ENCODE measurements at regions of chr21 and their contacts with region 1.

Region 1: GRCh38 chr21:26170471-26171257 is at the start of gene APP:
- DNase-seq: peak; percentile 87
- H3K4me3 Mint-ChIP-seq: peak within 1 kb of the TSS; percentile 90
- H3K27ac Mint-ChIP-seq: peak within 1 kb of the TSS; percentile 66
- H3K4me1 Mint-ChIP-seq: peaks cover 21% of the 10 kb centered on the region
- H3K27me3 Mint-ChIP-seq: no peaks in the 10 kb centered on the region
- total RNA-seq, gene APP: 60.6 to 61.1 TPM

Region 2: DNA sequence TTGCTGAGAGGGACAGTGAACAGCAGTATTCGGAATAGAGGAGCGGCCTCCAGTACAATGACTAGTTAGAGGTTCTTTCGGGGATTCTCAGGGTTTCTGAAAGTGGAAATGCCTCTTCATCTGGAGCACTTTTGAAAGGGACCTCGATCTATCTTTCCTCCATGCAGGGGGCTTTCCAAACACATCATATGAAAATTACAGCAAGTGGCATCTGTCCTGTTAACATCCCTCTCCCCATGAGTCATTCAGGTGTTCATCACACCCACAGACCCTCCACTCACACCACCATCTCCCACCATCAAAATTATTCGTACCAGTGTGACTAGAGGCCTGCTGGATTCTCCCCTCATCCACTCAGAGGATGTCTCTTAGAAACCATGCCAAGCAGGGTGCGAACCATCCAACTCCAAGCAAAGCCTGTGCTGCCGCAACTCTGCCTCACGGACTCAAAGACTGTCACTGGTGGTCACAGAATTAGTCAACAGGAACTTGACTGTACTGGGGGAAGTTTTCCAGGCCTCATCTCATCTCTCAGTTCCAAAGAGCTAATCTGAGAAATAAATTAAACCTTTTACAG is 774.4 kb before region 1 on chr21:
- CTCF ChIA-PET with region 1: no interaction called
- intact Hi-C with region 1: loop called (anchors 10 kb)
- DNase-seq: peak; percentile 89
- H3K4me3 Mint-ChIP-seq: peak overlapping the region; percentile 41
- H3K27ac Mint-ChIP-seq: peak overlapping the region; percentile 81
- H3K4me1 Mint-ChIP-seq: peaks cover 18% of the 10 kb centered on the region
- H3K27me3 Mint-ChIP-seq: peaks cover 2% of the 10 kb centered on the region

Region 3: GRCh38 chr21:25801217-25802014 is 369.2 kb before region 1 on chr21:
- CTCF ChIA-PET with region 1: no interaction called
- intact Hi-C with region 1: loop called (anchors 5 kb)
- DNase-seq: peak; percentile 95
- H3K4me3 Mint-ChIP-seq: peak overlapping the region; percentile 23
- H3K27ac Mint-ChIP-seq: no peak overlapping the region
- H3K4me1 Mint-ChIP-seq: peaks cover 6% of the 10 kb centered on the region
- H3K27me3 Mint-ChIP-seq: peaks cover 8% of the 10 kb centered on the region

Region 4: GRCh38 chr21:25895565-25896205 is 275.0 kb before region 1 on chr21:
- CTCF ChIA-PET with region 1: interaction called, 28 read pairs
- intact Hi-C with region 1: loop called (anchors 1 kb)
- DNase-seq: peak; percentile 37
- H3K4me3 Mint-ChIP-seq: no peak overlapping the region
- H3K27ac Mint-ChIP-seq: no peak overlapping the region
- H3K4me1 Mint-ChIP-seq: peaks cover 6% of the 10 kb centered on the region
- H3K27me3 Mint-ChIP-seq: no peaks in the 10 kb centered on the region

Region 5: GRCh38 chr21:26011292-26011940 is 159.2 kb before region 1 on chr21:
- CTCF ChIA-PET with region 1: no interaction called
- intact Hi-C with region 1: loop called (anchors 2 kb)
- DNase-seq: no peak
- H3K4me3 Mint-ChIP-seq: no peak overlapping the region
- H3K27ac Mint-ChIP-seq: no peak overlapping the region
- H3K4me1 Mint-ChIP-seq: no peaks in the 10 kb centered on the region
- H3K27me3 Mint-ChIP-seq: no peaks in the 10 kb centered on the region

Region 6: GRCh38 chr21:26127918-26128317 is 42.7 kb before region 1 on chr21:
- CTCF ChIA-PET with region 1: no interaction called
- intact Hi-C with region 1: no loop called
- DNase-seq: no peak
- H3K4me3 Mint-ChIP-seq: no peak overlapping the region
- H3K27ac Mint-ChIP-seq: no peak overlapping the region
- H3K4me1 Mint-ChIP-seq: peaks cover 8% of the 10 kb centered on the region
- H3K27me3 Mint-ChIP-seq: no peaks in the 10 kb centered on the region

Region 7: GRCh38 chr21:26157801-26158200 is 12.9 kb before region 1 on chr21:
- CTCF ChIA-PET with region 1: interaction called, 10 read pairs
- intact Hi-C with region 1: no loop called
- DNase-seq: no peak
- H3K4me3 Mint-ChIP-seq: no peak overlapping the region
- H3K27ac Mint-ChIP-seq: no peak overlapping the region
- H3K4me1 Mint-ChIP-seq: peaks cover 19% of the 10 kb centered on the region
- H3K27me3 Mint-ChIP-seq: no peaks in the 10 kb centered on the region